IMR-90 (cell line): ENCODE measurements at regions of chr4 and their contacts with region 1.

Region 1: DNA sequence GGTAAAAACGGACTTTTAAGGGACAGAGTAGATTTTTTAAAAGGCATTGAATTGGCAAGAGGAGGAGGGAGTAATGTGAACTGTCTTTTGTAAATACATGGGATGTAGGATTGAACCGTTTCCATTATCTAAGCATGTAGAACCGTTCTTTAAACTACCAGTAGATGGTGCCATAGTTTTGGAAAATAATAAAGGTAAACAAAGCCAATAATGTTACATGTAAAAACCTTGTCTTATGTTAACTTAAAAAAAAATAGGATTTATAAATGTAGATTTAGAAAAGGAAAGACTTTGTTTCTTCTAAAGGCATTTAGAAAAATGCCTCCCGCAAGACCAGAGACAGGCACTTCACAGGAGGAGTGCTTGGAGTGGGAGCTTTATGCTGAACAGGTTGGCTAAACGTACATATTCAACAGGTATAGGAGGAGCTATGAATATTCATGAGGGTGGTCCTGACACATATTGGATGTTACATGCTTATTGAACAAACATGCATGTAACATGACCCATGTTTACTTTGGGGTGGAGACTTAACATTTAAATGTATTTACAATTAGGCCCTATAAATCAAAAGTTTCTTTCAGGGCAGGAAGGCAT is 45.5 kb upstream of the FAM241A start:
- DNase-seq: peak; percentile 73
- ATAC-seq: peak; percentile 95
- H3K4me3 ChIP-seq: no peak overlapping the region
- H3K27ac ChIP-seq: no peak overlapping the region
- H3K4me1 ChIP-seq: no peaks in the 10 kb centered on the region
- H3K27me3 ChIP-seq: peaks cover 3% of the 10 kb centered on the region; the same call in 1 of the 2 replicates
- CTCF ChIP-seq: peak; percentile 87
- POLR2A ChIP-seq: no peak
- RAD21 ChIP-seq: peak; percentile 86

Region 2: GRCh38 chr4:112231779-112232713 is 132.2 kb after region 1 on chr4 and contains the start of gene AP1AR:
- CTCF ChIA-PET with region 1: interaction called, 12 read pairs
- POLR2A ChIA-PET with region 1: no interaction called
- dilution Hi-C with region 1: no loop called
- in situ Hi-C with region 1: loop called (anchors 5 kb)
- intact Hi-C with region 1: loop called (anchors 1 kb)
- DNase-seq: peak; percentile 64
- ATAC-seq: peak; percentile 79
- H3K4me3 ChIP-seq: peak within 1 kb of the TSS; percentile 80
- H3K27ac ChIP-seq: peak within 1 kb of the TSS; percentile 94
- H3K4me1 ChIP-seq: no peaks in the 10 kb centered on the region
- H3K27me3 ChIP-seq: no peaks in the 10 kb centered on the region
- CTCF ChIP-seq: peak; percentile 44
- POLR2A ChIP-seq: peak; percentile 81; the same call in 1 of the 2 replicates
- RAD21 ChIP-seq: peak; percentile 20; the same call in 1 of the 2 replicates
- total RNA-seq, gene AP1AR: 4.7 and 8.3 TPM in 2 replicates

Region 3: GRCh38 chr4:112266821-112267220 is 167.0 kb after region 1 on chr4:
- CTCF ChIA-PET with region 1: interaction called, 3 read pairs
- POLR2A ChIA-PET with region 1: no interaction called
- dilution Hi-C with region 1: no loop called
- in situ Hi-C with region 1: loop called (anchors 10 kb)
- intact Hi-C with region 1: loop called (anchors 2 kb)
- DNase-seq: peak; percentile 52
- ATAC-seq: peak; percentile 38; the same call in 1 of the 2 replicates
- H3K4me3 ChIP-seq: no peak overlapping the region
- H3K27ac ChIP-seq: no peak overlapping the region
- H3K4me1 ChIP-seq: peaks cover 3% of the 10 kb centered on the region
- H3K27me3 ChIP-seq: no peaks in the 10 kb centered on the region
- CTCF ChIP-seq: peak; percentile 55
- POLR2A ChIP-seq: no peak
- RAD21 ChIP-seq: peak; percentile 39; the same call in 1 of the 2 replicates

Region 4: DNA sequence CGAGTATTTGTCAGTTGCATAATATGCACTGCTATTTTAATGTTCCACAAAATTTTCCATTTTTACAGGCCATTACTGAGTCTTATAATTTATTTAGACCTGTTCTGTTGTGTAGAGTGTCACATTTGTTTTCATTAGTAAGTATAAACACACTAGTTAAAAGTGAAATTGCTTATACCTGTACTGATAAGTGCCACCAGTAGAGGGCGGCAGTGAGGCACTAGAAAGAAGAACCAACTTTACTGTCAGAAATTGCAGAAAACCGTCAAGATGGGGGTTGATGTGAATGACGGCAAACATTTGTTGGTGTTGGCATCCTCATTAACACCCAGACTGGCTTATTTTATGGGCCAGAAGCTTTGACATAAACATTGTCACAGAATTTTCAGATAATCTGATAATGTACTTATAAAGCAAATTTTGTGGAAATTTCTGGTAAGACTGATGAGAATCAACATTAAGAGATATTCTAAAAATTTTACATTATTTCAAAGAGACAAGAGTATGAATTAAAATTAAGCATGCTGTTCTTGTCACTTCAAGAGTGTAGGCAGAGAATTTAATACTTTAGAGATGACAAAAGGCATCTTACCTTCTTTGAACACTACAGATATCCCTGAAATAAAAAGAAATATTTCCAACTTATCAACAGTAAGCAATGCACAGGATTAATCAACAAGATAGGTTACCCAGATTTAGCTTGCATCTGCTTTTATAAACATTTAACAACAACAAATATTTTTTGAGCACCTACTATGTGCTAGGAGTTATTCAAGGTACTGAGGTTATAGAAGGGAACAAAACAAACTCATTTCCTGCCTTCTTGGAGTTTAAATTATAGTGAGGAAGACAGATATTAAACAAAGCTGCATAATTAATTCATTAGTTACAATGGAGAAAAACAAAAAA is 222.2 kb after region 1 on chr4:
- CTCF ChIA-PET with region 1: no interaction called
- POLR2A ChIA-PET with region 1: no interaction called
- dilution Hi-C with region 1: no loop called
- in situ Hi-C with region 1: no loop called
- intact Hi-C with region 1: loop called (anchors 1 kb)
- DNase-seq: peak; percentile 60
- ATAC-seq: peak; percentile 85
- H3K4me3 ChIP-seq: no peak overlapping the region
- H3K27ac ChIP-seq: no peak overlapping the region
- H3K4me1 ChIP-seq: no peaks in the 10 kb centered on the region
- H3K27me3 ChIP-seq: no peaks in the 10 kb centered on the region
- CTCF ChIP-seq: peak; percentile 77
- POLR2A ChIP-seq: no peak
- RAD21 ChIP-seq: peak; percentile 58

Region 5: GRCh38 chr4:112523764-112524505 is 424.1 kb after region 1 on chr4:
- CTCF ChIA-PET with region 1: no interaction called
- POLR2A ChIA-PET with region 1: no interaction called
- dilution Hi-C with region 1: no loop called
- in situ Hi-C with region 1: no loop called
- intact Hi-C with region 1: loop called (anchors 5 kb)
- DNase-seq: no peak
- ATAC-seq: peak; percentile 65
- H3K4me3 ChIP-seq: peak overlapping the region; percentile 32; the same call in 1 of the 2 replicates
- H3K27ac ChIP-seq: no peak overlapping the region
- H3K4me1 ChIP-seq: no peaks in the 10 kb centered on the region; the same call in 1 of the 2 replicates
- H3K27me3 ChIP-seq: peaks cover 53% of the 10 kb centered on the region
- CTCF ChIP-seq: peak; percentile 57
- POLR2A ChIP-seq: no peak
- RAD21 ChIP-seq: peak; percentile 57

Region 6: DNA sequence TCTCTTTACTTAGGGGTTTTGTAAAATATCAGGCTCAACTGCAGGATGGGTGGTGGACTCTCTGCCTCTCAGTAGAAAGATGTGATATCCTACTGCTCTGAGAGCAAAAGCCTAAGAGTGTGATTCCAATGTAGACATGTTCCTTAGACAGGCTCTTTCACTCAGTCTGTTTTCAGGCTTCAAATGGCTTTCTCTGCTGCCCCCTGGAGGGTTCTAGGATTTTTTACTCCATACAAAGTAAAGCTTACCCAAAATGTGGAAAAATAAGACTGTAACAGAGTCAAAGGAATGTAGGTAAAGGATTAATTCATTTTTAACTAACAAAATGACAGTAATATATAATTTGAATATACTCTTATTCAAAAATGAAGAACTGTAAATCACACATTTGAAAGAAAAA is 504.8 kb after region 1 on chr4:
- CTCF ChIA-PET with region 1: interaction called, 4 read pairs
- POLR2A ChIA-PET with region 1: no interaction called
- dilution Hi-C with region 1: no loop called
- in situ Hi-C with region 1: no loop called
- intact Hi-C with region 1: loop called (anchors 1 kb)
- DNase-seq: peak; percentile 65
- ATAC-seq: peak; percentile 99
- H3K4me3 ChIP-seq: no peak overlapping the region
- H3K27ac ChIP-seq: no peak overlapping the region
- H3K4me1 ChIP-seq: no peaks in the 10 kb centered on the region
- H3K27me3 ChIP-seq: no peaks in the 10 kb centered on the region
- CTCF ChIP-seq: peak; percentile 73
- POLR2A ChIP-seq: no peak
- RAD21 ChIP-seq: peak; percentile 80